ENCODE measurements at regions of chr3 and their contacts with region 1.

Region 1: GRCh38 chr3:26712211-26713026 is 89.8 kb downstream of the LRRC3B start:
- DNase-seq: peak; percentile 6
- H3K4me3 Mint-ChIP-seq: no peak overlapping the region
- H3K27ac Mint-ChIP-seq: no peak overlapping the region
- H3K4me1 Mint-ChIP-seq: no peaks in the 10 kb centered on the region
- H3K27me3 Mint-ChIP-seq: no peaks in the 10 kb centered on the region
- CTCF ChIP-seq: peak; percentile 51

Region 2: DNA sequence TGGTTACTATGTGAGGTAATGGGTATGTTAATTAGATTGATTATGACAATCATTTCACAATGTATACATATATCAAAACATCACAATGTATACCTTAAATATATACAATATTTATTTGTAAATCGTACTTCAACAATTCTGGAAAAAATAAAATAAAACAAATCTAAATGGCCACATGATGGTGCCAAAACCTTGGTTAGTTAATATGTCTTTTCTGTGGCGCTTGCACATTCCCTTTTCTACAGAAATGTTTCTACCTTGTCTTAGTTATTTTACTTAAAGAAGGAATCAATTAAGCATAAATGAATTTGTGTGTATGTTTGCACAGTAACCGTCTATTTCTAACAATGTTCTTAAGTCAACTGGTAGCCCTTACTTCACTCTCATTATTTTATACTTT is 869.1 kb before region 1 on chr3:
- CTCF ChIA-PET with region 1: no interaction called
- intact Hi-C with region 1: loop called (anchors 5 kb)
- DNase-seq: no peak
- H3K4me3 Mint-ChIP-seq: no peak overlapping the region
- H3K27ac Mint-ChIP-seq: no peak overlapping the region
- H3K4me1 Mint-ChIP-seq: no peaks in the 10 kb centered on the region
- H3K27me3 Mint-ChIP-seq: no peaks in the 10 kb centered on the region
- CTCF ChIP-seq: no peak

Region 3: DNA sequence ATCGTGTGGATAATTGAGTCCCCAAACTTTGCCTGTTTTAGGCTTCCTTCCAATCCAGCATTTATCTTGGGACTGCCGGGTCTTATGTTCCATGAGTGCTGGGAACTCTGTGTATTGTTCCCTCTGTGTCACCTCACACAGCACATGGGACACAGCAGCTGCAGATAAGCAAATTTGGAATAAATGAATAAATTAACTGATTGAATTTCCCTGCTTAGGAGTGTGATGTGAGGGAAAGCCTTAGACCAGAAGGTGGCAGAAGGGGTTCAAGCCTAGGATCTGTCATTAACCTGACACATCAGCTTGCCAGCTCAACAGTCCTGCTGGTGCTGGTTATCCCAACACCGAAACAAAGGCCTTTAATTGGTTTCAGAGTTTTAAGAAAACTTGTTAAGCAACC is 808.2 kb before region 1 on chr3:
- CTCF ChIA-PET with region 1: no interaction called
- intact Hi-C with region 1: loop called (anchors 1 kb)
- DNase-seq: peak; percentile 6
- H3K4me3 Mint-ChIP-seq: no peak overlapping the region
- H3K27ac Mint-ChIP-seq: no peak overlapping the region
- H3K4me1 Mint-ChIP-seq: no peaks in the 10 kb centered on the region
- H3K27me3 Mint-ChIP-seq: no peaks in the 10 kb centered on the region
- CTCF ChIP-seq: no peak

Region 4: DNA sequence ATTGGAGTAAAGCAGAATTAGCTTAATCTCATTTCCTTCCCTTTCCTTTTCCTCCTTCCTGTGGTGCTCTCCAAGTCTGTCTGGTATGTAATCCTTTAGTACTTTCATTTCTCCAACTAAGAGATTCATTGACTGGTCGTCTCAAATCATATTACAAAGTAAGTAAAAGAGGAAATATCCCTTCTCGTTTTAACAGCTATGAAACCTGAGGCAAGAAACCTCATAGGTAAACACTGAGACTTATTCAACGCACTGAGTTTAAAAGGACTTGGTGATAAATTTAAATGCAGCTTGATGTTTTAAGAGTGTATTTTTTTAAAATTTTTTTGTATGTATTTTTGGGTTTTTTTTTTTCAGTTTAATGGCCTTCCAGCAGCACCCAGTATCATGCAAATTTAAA is 207.0 kb before region 1 on chr3:
- CTCF ChIA-PET with region 1: no interaction called
- intact Hi-C with region 1: loop called (anchors 5 kb)
- DNase-seq: no peak
- H3K4me3 Mint-ChIP-seq: no peak overlapping the region
- H3K27ac Mint-ChIP-seq: no peak overlapping the region
- H3K4me1 Mint-ChIP-seq: no peaks in the 10 kb centered on the region
- H3K27me3 Mint-ChIP-seq: no peaks in the 10 kb centered on the region
- CTCF ChIP-seq: no peak

Region 5: DNA sequence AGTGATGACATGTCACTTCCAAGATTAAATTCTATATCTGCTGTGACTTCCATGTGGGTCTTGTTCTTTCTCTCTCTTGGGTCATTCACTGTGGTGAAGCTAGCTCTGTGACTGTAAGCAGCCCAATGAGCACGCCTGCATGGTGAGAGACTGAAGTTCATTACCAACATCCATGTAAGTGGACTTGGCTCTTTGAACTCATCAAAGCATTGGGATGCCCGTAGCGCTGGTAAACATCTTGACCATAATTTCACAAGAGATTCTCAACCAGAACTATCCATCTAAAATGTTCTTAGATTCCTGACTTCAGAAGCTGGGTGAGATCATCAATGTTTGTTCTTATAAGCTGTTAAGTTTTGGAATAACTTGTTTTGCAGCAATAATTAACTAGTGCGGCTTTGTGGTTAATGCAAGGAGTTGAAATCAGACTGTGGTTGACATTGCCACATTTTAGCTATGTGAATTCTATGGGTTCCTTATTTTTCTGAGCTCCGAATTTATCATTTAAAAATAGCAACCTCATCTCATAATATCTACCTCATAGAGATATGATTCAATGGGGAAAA is 121.4 kb before region 1 on chr3:
- CTCF ChIA-PET with region 1: no interaction called
- intact Hi-C with region 1: loop called (anchors 5 kb)
- DNase-seq: peak; percentile 20
- H3K4me3 Mint-ChIP-seq: no peak overlapping the region
- H3K27ac Mint-ChIP-seq: peak overlapping the region; percentile 53
- H3K4me1 Mint-ChIP-seq: peaks cover 13% of the 10 kb centered on the region
- H3K27me3 Mint-ChIP-seq: peaks cover 71% of the 10 kb centered on the region
- CTCF ChIP-seq: no peak

Region 6: DNA sequence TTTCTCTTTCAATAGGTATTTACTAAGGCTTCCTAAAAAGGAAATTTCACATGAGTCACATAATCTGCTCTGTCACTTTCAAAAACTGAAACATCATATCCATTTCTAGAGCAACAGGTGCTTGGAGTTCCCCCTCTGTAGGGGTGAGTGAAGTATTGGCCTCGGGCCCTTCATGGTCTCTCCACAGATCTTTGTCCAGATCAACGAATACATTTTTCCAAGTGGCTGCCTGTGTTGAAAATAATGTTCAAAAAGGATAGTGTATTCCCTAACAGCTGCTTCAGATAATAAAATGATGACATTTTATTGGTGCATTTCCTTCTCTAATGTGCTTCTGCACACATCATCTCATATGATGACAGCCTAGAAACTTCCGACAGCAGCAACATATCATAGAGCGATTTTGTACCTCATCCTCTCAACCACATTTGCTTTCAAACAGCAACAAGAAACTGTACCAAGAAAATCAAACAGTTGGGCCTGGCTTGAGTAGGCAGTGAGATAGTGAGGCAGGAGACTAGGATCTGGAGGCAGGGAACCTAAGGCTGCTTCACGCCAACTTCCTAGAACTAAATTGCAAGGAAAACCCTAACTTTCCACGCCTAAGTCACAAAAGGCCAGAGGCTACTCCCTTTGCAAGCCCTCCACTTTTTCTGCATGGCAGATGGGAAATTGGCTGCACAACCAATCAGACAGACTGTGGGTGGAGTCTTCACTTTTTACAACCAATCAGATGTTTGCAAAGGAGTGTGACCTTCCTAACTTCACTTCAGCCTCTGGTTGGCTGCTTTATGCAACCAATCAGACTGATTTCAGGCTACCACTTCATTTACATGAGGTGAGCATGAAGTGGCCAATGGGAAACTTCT is 250.3 kb after region 1 on chr3:
- CTCF ChIA-PET with region 1: no interaction called
- intact Hi-C with region 1: loop called (anchors 10 kb)
- DNase-seq: no peak
- H3K4me3 Mint-ChIP-seq: no peak overlapping the region
- H3K27ac Mint-ChIP-seq: no peak overlapping the region
- H3K4me1 Mint-ChIP-seq: no peaks in the 10 kb centered on the region
- H3K27me3 Mint-ChIP-seq: no peaks in the 10 kb centered on the region
- CTCF ChIP-seq: no peak